Posterior vena cava (tissue), 2 donors: ENCODE measurements at regions of chrX and their contacts with region 1.

Region 1: GRCh38 chrX:24294620-24295019 is 19.2 kb downstream of the SUPT20HL2 start:
- DNase-seq: peak; percentile 84

Region 2: GRCh38 chrX:24150051-24150790 is 144.4 kb before region 1 on chrX:
- intact Hi-C with region 1: loop called in 1 of 2 experiments (anchors 5 kb)
- DNase-seq: peak; percentile 97

Region 3: DNA sequence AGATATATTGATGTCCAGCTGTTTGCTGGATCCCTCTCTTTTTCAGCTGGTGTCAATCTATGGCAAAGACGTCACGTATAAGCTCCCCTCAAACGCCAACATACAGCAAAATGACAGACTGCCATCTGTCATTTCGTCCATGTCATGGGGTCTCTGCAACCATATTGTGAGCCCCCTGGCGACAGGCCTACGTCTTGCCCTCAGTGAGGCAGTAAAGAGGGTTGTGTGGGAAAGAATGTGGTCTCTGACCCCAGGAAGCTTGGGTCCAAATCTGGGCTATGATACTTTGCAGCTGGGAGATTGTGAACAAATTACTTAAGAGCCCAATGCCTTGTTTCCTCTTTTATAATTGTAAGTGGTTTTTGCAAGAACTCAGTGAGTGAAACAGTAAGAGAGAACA is 11.8 kb after region 1 on chrX:
- intact Hi-C with region 1: no loop called
- DNase-seq: no peak